HCT116 (cell line): ENCODE measurements at regions of chr19 and their contacts with region 1.

Region 1: GRCh38 chr19:55632463-55632834 is 8.1 kb upstream of the ZNF784 start:
- DNase-seq: peak; percentile 95
- ATAC-seq: peak; percentile 69
- H3K4me3 ChIP-seq: peak overlapping the region in 1 of 2 experiments; percentile 19; a peak in 2 of 4 replicates
- H3K27ac ChIP-seq: no peak overlapping the region; the same call in 1 of the 2 replicates
- H3K4me1 ChIP-seq: peaks cover 22 to 36% of the 10 kb centered on the region in 2 experiments
- H3K27me3 ChIP-seq: no peaks in the 10 kb centered on the region
- CTCF ChIP-seq: peak; percentile 71 to 89 (median 86)
- POLR2A ChIP-seq: no peak
- RAD21 ChIP-seq: peak; percentile 73

Region 2: DNA sequence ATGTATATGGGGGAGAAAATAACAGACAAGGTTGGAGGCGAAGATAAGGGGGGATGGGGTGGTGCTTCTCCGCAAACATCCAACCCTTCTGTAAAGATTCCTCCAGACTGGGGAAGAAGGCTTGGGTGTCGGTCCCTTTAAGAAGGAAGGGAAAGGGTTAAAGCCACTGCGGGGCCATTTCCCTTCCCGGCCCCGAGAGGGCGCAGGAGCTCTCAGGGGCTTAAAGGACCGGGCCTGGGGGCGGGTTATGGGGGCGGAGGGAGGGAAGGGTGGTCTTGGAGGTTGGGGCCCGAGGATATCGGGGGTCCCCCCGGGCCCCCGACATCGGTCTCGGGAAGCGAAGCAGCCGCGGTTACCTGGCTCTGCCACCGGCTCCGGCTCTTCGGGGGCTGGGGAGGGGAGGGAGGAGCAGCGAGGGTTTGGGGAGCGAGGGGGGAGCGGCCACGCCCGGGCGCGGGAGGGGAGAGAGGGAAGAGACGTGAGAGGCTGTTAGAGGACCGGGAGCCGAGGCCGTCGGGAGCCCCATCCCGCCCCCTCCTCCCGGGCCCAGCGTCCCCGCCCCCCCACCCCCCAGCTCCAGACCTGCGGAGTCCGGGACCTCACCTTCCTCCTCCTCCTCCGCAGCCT is 486.3 kb before region 1 on chr19:
- CTCF ChIA-PET with region 1: interaction called, 5 read pairs
- POLR2A ChIA-PET with region 1: interaction called, 4 read pairs
- RAD21 ChIA-PET with region 1: no interaction called
- intact Hi-C with region 1: loop called (anchors 10 kb)
- DNase-seq: peak; percentile 64
- ATAC-seq: peak; percentile 76
- H3K4me3 ChIP-seq: peak overlapping the region; percentile 60 to 69
- H3K27ac ChIP-seq: peak overlapping the region; percentile 99
- H3K4me1 ChIP-seq: peaks cover 14 to 60% of the 10 kb centered on the region in 2 experiments
- H3K27me3 ChIP-seq: no peaks in the 10 kb centered on the region
- CTCF ChIP-seq: peak; percentile 78 to 86 (median 80)
- POLR2A ChIP-seq: no peak
- RAD21 ChIP-seq: no peak; the same call in 1 of the 2 replicates

Region 3: DNA sequence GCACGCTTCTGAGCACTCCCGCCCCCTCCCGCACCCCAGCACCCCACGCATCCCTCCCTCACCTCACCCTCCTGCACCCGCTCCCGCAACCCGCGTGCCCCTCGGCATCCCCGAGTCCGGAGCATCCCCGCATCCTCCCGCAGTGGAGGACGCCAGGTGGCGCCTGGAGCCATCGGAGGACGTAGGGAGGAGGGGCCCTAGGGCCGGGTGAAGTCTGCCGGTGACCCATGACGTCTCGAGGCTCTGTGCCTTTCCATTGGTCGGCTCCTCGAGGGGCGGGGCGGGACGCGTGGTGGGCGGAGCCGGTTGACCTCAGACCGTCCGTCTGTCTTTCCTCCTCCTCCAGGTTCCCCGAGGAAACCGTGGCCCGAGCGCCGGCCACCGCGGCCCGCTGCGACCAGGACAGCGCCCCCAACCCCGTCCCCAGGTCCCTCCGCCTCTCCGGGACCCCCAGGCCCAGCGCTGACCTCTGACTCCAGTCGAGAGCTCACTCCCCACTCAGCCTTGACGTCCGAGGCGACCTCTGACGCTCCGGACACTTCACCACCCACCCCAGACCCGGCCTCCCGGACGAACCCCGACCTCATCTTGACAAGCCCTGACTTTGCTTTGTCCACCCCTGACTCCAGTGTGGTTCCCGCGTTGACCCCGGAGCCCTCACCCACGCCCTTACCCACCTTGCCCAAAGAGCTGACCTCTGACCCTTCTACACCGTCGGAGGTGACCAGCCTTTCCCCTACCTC is 115.4 kb before region 1 on chr19:
- CTCF ChIA-PET with region 1: interaction called, 20 read pairs
- POLR2A ChIA-PET with region 1: interaction called, 3 read pairs
- RAD21 ChIA-PET with region 1: interaction called, 3 to 4 read pairs
- intact Hi-C with region 1: loop called (anchors 1 kb)
- DNase-seq: peak; percentile 87
- ATAC-seq: peak; percentile 99
- H3K4me3 ChIP-seq: peak overlapping the region; percentile 44 to 57
- H3K27ac ChIP-seq: peak overlapping the region; percentile 50; the same call in 1 of the 2 replicates
- H3K4me1 ChIP-seq: peaks cover 4 to 8% of the 10 kb centered on the region in 2 experiments; a peak in 3 of 4 replicates
- H3K27me3 ChIP-seq: no peaks in the 10 kb centered on the region
- CTCF ChIP-seq: peak; percentile 79 to 96 (median 90)
- POLR2A ChIP-seq: no peak
- RAD21 ChIP-seq: peak; percentile 100

Region 4: GRCh38 chr19:55643348-55644176 is 11.1 kb after region 1 on chr19 and contains the start of gene ZNF581:
- CTCF ChIA-PET with region 1: no interaction called
- POLR2A ChIA-PET with region 1: interaction called, 5 read pairs
- RAD21 ChIA-PET with region 1: interaction called in 1 of 2 experiments, 10 read pairs
- intact Hi-C with region 1: no loop called
- DNase-seq: no peak
- ATAC-seq: peak; percentile 48
- H3K4me3 ChIP-seq: peak within 1 kb of the TSS; percentile 94 to 97
- H3K27ac ChIP-seq: peak within 1 kb of the TSS; percentile 96
- H3K4me1 ChIP-seq: peaks cover 16 to 48% of the 10 kb centered on the region in 2 experiments; a peak in 3 of 4 replicates
- H3K27me3 ChIP-seq: no peaks in the 10 kb centered on the region
- CTCF ChIP-seq: no peak
- POLR2A ChIP-seq: no peak
- RAD21 ChIP-seq: no peak
- total RNA-seq, gene ZNF581: 44.4 TPM

Region 5: DNA sequence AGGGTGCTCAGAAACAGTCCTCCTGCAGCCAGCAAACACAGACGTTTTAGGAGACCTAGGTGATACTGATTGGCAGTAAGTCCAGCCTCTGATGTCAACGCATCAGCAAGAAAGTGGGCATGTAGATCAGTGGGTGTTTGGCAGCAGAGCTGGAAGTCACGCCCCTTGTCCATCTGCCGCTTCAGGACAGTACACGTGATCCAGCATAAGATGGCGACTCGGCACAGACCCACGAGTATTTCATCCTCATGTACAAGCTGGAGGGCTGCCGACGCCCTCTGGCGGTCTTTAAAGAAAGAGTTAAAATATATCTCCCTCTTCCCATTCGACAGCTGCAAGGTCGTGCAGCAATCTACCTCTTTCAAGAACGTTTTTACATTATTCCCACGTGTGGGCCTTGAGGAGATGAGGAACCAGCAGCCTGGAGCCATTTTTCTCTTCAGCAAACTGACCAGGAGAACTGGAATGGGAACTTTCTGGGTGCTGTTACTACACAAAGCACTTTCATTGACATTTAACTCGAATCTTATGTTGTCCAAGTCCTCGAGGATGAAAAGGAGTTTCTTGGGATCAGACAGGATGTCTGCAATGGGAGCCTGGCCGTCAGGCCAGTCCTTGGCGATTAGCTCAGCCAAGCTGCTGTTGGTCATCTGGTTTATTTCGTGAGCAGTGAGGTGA is 177.1 kb after region 1 on chr19:
- CTCF ChIA-PET with region 1: interaction called, 28 read pairs
- POLR2A ChIA-PET with region 1: interaction called, 3 read pairs
- RAD21 ChIA-PET with region 1: no interaction called
- intact Hi-C with region 1: loop called (anchors 5 kb)
- DNase-seq: peak; percentile 90
- ATAC-seq: peak; percentile 95
- H3K4me3 ChIP-seq: no peak overlapping the region
- H3K27ac ChIP-seq: no peak overlapping the region
- H3K4me1 ChIP-seq: peaks cover 0 to 7% of the 10 kb centered on the region in 2 experiments; a peak in 2 of 4 replicates
- H3K27me3 ChIP-seq: no peaks in the 10 kb centered on the region
- CTCF ChIP-seq: peak; percentile 55 to 66 (median 58)
- POLR2A ChIP-seq: no peak
- RAD21 ChIP-seq: peak; percentile 70